ENCODE measurements at regions of chr12 and their contacts with region 1.

Region 1: GRCh38 chr12:132268674-132269073 is 60.7 kb downstream of the GALNT9 start:
- DNase-seq: no peak
- H3K4me3 ChIP-seq: no peak overlapping the region
- H3K27ac ChIP-seq: no peak overlapping the region
- H3K4me1 ChIP-seq: no peaks in the 10 kb centered on the region
- H3K27me3 ChIP-seq: no peaks in the 10 kb centered on the region
- CTCF ChIP-seq: no peak

Region 2: GRCh38 chr12:132523576-132524331 is 255.1 kb after region 1 on chr12:
- CTCF ChIA-PET with region 1: no interaction called
- POLR2A ChIA-PET with region 1: interaction called, 11 read pairs
- intact Hi-C with region 1: no loop called
- DNase-seq: peak; percentile 60
- H3K4me3 ChIP-seq: no peak overlapping the region
- H3K27ac ChIP-seq: no peak overlapping the region
- H3K4me1 ChIP-seq: peaks cover 7% of the 10 kb centered on the region
- H3K27me3 ChIP-seq: no peaks in the 10 kb centered on the region
- CTCF ChIP-seq: peak; percentile 78

Measured in A673 (cell line).